GM12878 (cell line): ENCODE measurements at regions of chr15 and their contacts with region 1.

Region 1: DNA sequence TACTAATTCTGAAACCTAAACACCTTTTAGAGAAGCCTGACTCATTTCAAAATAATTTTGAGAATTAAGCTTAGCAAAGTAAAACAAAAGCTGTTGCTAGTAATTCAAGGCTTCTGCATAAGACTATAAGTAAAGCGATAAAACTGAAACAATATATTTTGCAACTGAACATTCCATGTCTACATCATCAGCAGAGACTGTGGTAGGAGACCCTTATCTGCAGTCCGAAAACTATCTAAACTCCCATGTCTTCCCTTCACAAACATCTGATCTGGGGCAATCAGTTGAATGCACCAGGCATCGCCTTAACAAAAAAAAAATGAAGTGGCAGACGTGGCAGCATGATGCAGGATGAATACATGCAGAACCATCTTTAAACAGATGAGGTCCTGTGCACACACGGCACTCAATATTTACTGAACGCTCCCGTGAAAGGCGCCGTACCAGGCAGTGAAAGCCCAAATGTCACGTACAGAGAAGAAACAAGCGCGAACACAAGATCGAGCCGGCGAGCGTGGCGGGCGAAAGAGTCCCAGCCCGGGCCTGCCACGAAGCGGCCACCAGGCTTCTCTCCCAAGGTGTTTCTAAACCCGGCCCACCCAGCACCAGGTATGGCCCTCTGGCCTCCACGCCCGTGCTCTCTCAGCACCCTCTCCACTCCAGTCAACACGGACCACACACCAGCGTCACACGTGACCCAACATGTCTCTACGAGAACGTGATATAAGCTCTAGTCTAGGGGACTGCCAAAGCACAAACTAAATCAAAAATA is 63.0 kb downstream of the CHSY1 start:
- DNase-seq: peak; percentile 39
- ATAC-seq: peak; percentile 84
- H3K4me3 ChIP-seq: peak overlapping the region; percentile 65; the same call in 1 of the 2 replicates
- H3K27ac ChIP-seq: peak overlapping the region; percentile 67
- H3K4me1 ChIP-seq: peaks cover 17% of the 10 kb centered on the region
- H3K27me3 ChIP-seq: no peaks in the 10 kb centered on the region
- CTCF ChIP-seq: no peak
- EP300 ChIP-seq: peak in 1 of 2 experiments; percentile 76; a peak in 2 of 4 replicates
- POLR2A ChIP-seq: no peak
- RAD21 ChIP-seq: no peak

Region 2: DNA sequence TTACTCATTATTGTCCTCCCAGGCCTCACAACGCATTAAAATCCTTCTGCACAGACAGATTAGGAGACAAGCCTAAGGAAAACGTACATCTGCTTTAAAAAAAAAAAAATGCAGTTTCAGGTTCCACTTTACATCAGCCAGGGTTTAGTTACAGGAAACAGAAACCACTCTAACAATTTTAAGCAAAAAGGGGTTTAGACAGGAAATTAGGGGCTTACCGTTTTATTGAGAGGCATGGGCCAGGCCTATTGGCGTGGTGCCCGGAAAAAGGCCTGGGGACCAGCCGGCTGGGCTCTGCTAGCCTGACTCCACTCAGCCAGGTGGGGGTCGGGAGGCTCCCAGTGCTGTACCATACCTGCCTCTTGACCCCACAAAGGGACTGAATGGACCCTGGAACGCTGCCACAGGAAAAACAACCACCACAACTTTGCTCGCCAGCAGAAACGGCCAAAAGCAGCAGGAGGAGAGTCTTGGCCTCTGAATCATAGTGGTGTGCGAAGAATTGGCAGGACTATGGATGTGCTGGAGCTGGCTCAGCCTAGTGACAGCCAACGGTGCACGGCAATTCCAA is 61.2 kb before region 1 on chr15:
- CTCF ChIA-PET with region 1: interaction called, 5 read pairs
- POLR2A ChIA-PET with region 1: interaction called, 4 read pairs
- RAD21 ChIA-PET with region 1: interaction called, 26 read pairs
- SMC1A ChIA-PET with region 1: interaction called, 8 read pairs
- in situ Hi-C with region 1: no loop called
- intact Hi-C with region 1: loop called (anchors 5 kb)
- DNase-seq: peak; percentile 82
- ATAC-seq: peak; percentile 80
- H3K4me3 ChIP-seq: peak overlapping the region; percentile 44; the same call in 1 of the 2 replicates
- H3K27ac ChIP-seq: peak overlapping the region; percentile 95
- H3K4me1 ChIP-seq: peaks cover 45% of the 10 kb centered on the region
- H3K27me3 ChIP-seq: no peaks in the 10 kb centered on the region; a peak in 1 of 4 replicates
- CTCF ChIP-seq: no peak
- EP300 ChIP-seq: peak; percentile 60 to 85; a peak in 2 of 4 replicates
- POLR2A ChIP-seq: no peak
- RAD21 ChIP-seq: no peak

Region 3: GRCh38 chr15:101201406-101202174 is 12.8 kb after region 1 on chr15:
- CTCF ChIA-PET with region 1: interaction called, 4 read pairs
- POLR2A ChIA-PET with region 1: interaction called, 3 read pairs
- RAD21 ChIA-PET with region 1: interaction called, 19 read pairs
- SMC1A ChIA-PET with region 1: interaction called, 24 read pairs
- in situ Hi-C with region 1: no loop called
- intact Hi-C with region 1: no loop called
- DNase-seq: no peak
- ATAC-seq: peak; percentile 7; the same call in 1 of the 3 replicates
- H3K4me3 ChIP-seq: no peak overlapping the region
- H3K27ac ChIP-seq: peak overlapping the region; percentile 31; the same call in 1 of the 2 replicates
- H3K4me1 ChIP-seq: peaks cover 48% of the 10 kb centered on the region
- H3K27me3 ChIP-seq: no peaks in the 10 kb centered on the region
- CTCF ChIP-seq: no peak
- EP300 ChIP-seq: no peak
- POLR2A ChIP-seq: no peak
- RAD21 ChIP-seq: no peak

Region 4: DNA sequence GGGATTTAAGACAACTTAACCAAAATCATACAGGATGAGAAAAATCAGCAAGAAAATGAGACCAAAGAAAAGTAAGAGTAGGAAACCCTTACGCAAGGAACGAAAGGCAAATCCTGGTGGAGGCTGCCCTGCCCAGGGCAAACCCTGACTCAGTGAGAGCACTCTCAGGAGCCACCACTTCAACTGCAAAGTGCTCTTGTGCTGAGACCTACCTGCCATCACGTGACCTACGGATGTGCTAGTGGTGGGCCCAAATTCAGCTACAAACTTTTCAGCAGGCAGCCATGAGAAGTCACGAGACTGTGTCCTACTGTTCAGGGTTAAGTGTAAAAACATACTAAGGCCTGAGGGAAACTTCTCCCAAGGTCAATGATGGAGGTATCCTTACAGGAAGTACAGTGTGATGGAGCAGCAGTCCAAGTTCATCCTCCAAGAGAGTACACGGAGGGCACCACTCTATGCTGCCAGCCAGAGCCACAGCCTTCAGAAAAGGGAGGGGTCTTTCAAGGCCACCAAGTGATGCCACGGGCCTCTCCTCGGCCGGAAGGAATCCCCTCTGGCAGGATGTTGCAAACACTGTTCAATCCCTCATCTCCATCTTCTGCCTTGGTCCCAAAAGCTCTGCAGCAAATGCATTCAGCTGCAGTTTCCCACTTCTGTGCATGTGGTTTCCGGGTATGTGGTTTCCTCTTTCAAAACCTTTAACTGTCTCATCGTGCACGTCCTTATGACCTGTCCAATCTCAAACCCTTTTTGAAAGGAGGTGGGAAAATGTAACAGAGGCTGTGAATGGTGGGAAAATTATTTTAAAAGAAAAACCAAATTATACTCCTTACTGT is 53.6 kb after region 1 on chr15:
- CTCF ChIA-PET with region 1: interaction called, 9 read pairs
- POLR2A ChIA-PET with region 1: interaction called, 11 read pairs
- RAD21 ChIA-PET with region 1: interaction called, 6 read pairs
- SMC1A ChIA-PET with region 1: interaction called, 18 read pairs
- in situ Hi-C with region 1: no loop called
- intact Hi-C with region 1: no loop called
- DNase-seq: peak; percentile 74
- ATAC-seq: peak; percentile 77
- H3K4me3 ChIP-seq: peak overlapping the region; percentile 44
- H3K27ac ChIP-seq: peak overlapping the region; percentile 69
- H3K4me1 ChIP-seq: peaks cover 43% of the 10 kb centered on the region
- H3K27me3 ChIP-seq: no peaks in the 10 kb centered on the region
- CTCF ChIP-seq: no peak
- EP300 ChIP-seq: peak in 1 of 2 experiments; percentile 74; a peak in 2 of 4 replicates
- POLR2A ChIP-seq: peak; percentile 12; the same call in 1 of the 2 replicates
- RAD21 ChIP-seq: no peak

Region 5: GRCh38 chr15:101426881-101427280 is 238.1 kb after region 1 on chr15:
- CTCF ChIA-PET with region 1: no interaction called
- POLR2A ChIA-PET with region 1: no interaction called
- RAD21 ChIA-PET with region 1: no interaction called
- SMC1A ChIA-PET with region 1: no interaction called
- in situ Hi-C with region 1: no loop called
- intact Hi-C with region 1: no loop called
- DNase-seq: no peak
- ATAC-seq: no peak
- H3K4me3 ChIP-seq: no peak overlapping the region
- H3K27ac ChIP-seq: no peak overlapping the region
- H3K4me1 ChIP-seq: no peaks in the 10 kb centered on the region
- H3K27me3 ChIP-seq: no peaks in the 10 kb centered on the region; a peak in 2 of 4 replicates
- CTCF ChIP-seq: no peak
- EP300 ChIP-seq: no peak
- POLR2A ChIP-seq: no peak
- RAD21 ChIP-seq: no peak